ENCODE measurements at regions of chr1 and their contacts with region 1.

Region 1: GRCh38 chr1:27772933-27773825 is at the start of gene STX12:
- DNase-seq: peak; percentile 99
- H3K4me3 ChIP-seq: peak within 1 kb of the TSS; percentile 99
- H3K27ac ChIP-seq: peak within 1 kb of the TSS; percentile 79
- H3K27me3 ChIP-seq: no peaks in the 10 kb centered on the region
- CTCF ChIP-seq: no peak
- polyA plus RNA-seq, gene STX12: 34.5 and 42.6 TPM in 2 replicates

Region 2: GRCh38 chr1:27656157-27656893 is 116.9 kb before region 1 on chr1:
- CTCF ChIA-PET with region 1: no interaction called
- POLR2A ChIA-PET with region 1: no interaction called
- DNase-seq: no peak
- H3K4me3 ChIP-seq: no peak overlapping the region
- H3K27ac ChIP-seq: no peak overlapping the region
- H3K27me3 ChIP-seq: no peaks in the 10 kb centered on the region
- CTCF ChIP-seq: no peak

Region 3: DNA sequence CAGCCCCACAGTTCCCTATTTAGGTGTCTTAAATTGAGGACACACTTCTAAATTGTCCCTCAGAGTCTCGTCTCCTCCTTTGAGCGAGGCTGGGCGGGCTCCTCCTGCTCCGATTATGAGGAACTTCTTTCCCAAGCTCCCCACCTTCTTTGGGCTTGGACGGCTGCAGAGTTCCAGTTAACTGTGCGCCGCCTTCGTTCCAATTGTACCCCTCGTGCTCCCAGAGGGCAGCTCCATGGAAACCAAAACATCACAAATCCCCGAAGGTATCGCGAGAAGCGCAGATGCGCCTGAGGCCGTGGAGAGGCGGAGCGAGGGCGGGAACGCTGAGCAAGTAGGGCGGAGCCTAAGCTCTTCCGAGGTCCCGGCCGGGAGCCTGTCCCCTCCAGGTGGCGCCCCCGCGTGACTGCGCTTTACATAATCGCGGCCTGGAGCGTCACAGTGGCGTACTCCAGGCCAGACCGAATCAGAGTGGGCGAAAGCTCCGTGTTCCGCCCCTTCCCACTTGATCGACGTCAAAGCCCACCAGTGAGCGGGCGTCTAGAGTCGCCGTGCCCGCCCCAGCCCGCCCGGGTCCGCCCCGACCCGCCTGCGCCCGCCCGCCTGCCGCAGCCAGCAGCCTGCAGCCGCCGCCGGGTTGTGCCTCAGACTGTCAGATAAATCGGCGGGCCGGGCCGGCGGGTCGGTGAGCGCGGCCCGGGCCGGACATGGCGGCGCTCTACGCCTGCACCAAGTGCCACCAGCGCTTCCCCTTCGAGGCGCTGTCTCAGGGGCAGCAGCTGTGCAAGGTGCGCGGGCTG is 47.6 kb before region 1 on chr1 and contains the start of gene FAM76A:
- CTCF ChIA-PET with region 1: interaction called, 10 read pairs
- POLR2A ChIA-PET with region 1: interaction called, 25 read pairs
- DNase-seq: peak; percentile 99
- H3K4me3 ChIP-seq: peak within 1 kb of the TSS; percentile 85
- H3K27ac ChIP-seq: peak within 1 kb of the TSS; percentile 61
- H3K27me3 ChIP-seq: no peaks in the 10 kb centered on the region
- CTCF ChIP-seq: peak; percentile 46
- polyA plus RNA-seq, gene FAM76A: 4.1 and 4.9 TPM in 2 replicates

Region 4: DNA sequence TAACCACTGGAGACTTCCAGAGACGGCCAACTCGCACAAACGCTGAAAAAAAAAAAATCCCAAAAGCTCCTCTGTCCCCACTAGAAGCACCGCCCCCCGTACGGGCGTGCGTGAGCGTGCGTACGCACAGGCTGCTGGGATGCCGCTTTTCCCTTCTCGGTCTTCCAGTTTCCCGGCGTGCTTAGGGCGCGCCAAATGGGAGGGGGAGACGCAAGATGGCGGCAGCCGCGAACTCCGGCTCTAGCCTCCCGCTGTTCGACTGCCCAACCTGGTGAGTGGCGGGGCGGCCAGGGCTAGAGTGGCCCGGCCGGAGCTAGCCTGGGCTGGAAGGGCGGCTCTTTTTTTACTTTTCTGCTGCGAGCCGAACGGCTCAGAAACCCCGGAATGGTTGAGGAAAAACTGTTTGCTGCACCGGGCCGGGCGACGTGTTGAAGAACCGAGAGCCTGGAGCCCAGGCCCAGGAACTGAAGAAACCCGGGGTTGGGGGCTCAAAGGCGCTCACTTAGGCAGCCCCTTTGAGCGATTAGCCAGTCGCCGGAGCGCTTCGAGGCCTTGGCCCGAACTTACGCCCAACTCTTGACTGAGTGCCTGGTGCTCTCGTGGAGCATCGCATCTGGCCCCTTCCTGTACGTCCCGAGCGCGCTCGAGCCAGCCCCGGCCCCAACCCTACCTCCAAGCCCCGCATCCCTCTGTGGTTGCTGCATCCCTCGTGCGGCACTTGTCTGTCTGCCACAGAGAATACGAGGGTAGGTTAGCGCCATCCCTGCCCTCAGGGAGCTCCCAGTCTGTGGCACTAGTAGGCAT is 57.6 kb after region 1 on chr1 and contains the start of gene PPP1R8:
- CTCF ChIA-PET with region 1: no interaction called
- POLR2A ChIA-PET with region 1: interaction called, 27 read pairs
- DNase-seq: peak; percentile 83
- H3K4me3 ChIP-seq: peak within 1 kb of the TSS; percentile 93
- H3K27ac ChIP-seq: peak within 1 kb of the TSS; percentile 85
- H3K27me3 ChIP-seq: no peaks in the 10 kb centered on the region
- CTCF ChIP-seq: no peak
- polyA plus RNA-seq, gene PPP1R8: 52.7 and 55.2 TPM in 2 replicates

Region 5: DNA sequence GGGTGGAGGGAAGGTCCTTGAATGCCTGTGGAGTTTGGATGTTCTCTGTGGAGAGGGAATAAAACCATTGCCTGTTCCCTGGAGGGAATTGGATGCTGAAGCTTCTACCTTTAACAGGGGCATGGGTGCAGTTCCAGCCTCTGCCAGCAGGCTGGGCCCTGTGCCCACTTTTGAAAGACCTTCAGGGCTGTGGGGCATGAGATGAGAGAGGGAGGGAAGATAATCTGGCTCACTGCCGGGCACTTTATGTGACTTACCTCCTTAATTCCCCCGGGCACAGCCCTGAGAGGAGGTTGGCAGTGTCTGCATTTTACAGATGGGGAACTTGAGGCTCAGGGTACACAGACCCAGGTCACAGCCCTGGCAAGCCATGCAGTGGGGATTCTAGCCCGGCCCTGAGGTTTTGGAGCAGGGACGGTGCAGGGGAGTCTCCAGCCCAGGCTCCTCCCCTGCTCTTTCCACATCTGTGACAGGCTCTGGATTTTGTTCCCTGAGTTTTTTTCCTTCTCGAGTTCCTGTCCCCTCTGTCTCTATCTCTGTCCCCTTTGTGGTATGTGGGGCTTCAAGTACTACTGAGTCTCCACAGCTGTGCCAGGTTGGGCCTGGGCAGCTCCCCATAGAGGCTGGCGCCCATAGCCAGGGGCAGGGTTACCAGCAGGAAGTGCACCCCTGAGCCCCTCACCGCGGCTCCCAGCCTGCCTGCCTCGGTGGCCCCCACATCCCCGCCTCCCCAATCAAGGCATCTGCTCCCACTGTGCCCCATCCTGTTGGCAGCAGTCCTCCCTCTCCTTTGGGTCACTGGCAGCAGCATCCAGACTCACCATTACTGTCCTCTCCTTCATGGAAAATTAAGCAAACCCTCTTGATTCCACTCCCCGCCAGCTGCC is 85.1 kb after region 1 on chr1:
- CTCF ChIA-PET with region 1: no interaction called
- POLR2A ChIA-PET with region 1: no interaction called
- DNase-seq: peak; percentile 63
- H3K4me3 ChIP-seq: no peak overlapping the region
- H3K27ac ChIP-seq: no peak overlapping the region
- H3K27me3 ChIP-seq: no peaks in the 10 kb centered on the region
- CTCF ChIP-seq: peak; percentile 97